Motor neuron (in vitro differentiated cells): ENCODE measurements at regions of chr3 and their contacts with region 1.

Region 1: DNA sequence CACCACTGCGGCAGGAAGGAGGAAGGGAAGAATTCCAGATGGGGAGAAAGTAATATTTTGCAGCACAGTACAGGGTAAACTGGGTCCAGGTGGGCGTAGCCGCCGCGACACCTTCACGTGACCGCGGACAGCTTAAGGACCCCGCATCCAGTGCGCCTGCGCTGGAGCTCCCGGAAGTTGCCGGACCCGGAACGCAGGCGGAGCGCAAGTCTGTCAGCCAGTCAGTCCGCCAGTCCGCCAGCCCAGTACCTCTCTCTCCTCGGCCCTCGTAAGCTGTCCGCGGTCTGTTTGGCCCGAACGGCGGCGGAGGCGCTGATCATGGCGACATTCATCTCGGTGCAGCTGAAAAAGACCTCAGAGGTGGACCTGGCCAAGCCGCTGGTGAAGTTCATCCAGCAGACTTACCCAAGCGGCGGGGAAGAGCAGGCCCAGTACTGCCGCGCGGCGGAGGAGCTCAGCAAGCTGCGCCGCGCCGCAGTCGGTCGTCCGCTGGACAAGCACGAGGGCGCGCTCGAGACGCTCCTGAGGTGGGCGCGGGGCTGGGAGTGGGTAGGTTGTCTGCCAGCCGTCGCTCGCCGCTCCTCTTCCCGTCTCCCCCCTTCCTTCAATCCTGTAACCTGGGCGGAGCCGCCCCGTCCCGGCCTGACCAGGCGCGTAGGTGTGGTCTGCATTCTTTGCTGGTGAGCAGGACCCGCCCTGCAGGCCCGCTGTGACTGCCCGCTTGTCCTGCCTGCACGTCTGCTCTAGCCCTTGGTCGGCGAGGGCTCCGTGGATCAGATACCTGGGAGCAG is at the start of gene PDCD6IP:
- ATAC-seq: peak; percentile 87 to 92 (median 91)
- H3K4me3 ChIP-seq: peak within 1 kb of the TSS; percentile 77 to 96 (median 79)
- H3K27ac ChIP-seq: peak within 1 kb of the TSS; percentile 53 to 90
- H3K4me1 ChIP-seq: peaks cover 4 to 19% of the 10 kb centered on the region in 2 donors
- total RNA-seq, gene PDCD6IP: 56.8 to 166 (median 96.8) TPM

Region 2: GRCh38 chr3:33131331-33132018 is 667.1 kb before region 1 on chr3:
- in situ Hi-C with region 1: loop called in 1 of 9 experiments (anchors 25 kb)
- ATAC-seq: peak; percentile 79 to 96 (median 87)
- H3K4me3 ChIP-seq: no peak overlapping the region
- H3K27ac ChIP-seq: no peak overlapping the region
- H3K4me1 ChIP-seq: no peaks in the 10 kb centered on the region

Region 3: DNA sequence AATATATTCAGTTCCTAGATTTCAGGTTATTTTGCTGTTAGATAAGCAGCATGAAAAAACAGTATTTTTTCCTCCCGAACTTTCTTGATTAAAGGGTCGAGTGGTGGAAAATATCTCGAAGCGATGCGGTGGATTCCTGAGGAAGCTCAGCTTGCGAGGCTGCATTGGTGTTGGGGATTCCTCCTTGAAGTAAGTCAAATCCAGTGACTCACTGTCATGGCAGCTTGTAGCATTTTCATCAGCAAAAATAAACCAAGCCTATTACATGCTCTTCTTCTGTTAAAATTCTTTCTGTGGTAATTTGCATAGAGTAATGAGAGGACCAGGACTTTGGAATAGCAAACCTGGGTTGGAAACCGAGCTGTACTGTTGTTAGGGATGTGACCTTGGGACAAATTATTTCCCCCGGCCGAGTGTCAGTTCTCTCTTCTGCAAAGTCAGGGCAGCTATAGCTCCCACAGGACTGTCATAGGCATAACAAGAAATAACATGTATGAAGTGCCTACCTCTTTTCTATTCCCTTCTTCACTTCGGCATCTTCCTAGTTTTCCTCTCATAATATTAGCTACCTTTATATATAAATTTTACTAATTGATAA is 434.0 kb before region 1 on chr3:
- in situ Hi-C with region 1: no loop called
- ATAC-seq: no peak
- H3K4me3 ChIP-seq: no peak overlapping the region
- H3K27ac ChIP-seq: no peak overlapping the region
- H3K4me1 ChIP-seq: no peaks in the 10 kb centered on the region

Region 4: GRCh38 chr3:33392703-33393125 is 405.9 kb before region 1 on chr3:
- in situ Hi-C with region 1: loop called in 1 of 9 experiments (anchors 25 kb)
- ATAC-seq: peak in 7 of 8 experiments; percentile 50 to 91 (median 73)
- H3K4me3 ChIP-seq: no peak overlapping the region
- H3K27ac ChIP-seq: no peak overlapping the region
- H3K4me1 ChIP-seq: peaks cover 0 to 9% of the 10 kb centered on the region in 2 donors

Region 5: GRCh38 chr3:33636125-33636850 is 162.3 kb before region 1 on chr3:
- in situ Hi-C with region 1: loop called in 3 of 9 experiments (anchors 25 kb)
- ATAC-seq: peak in 1 of 8 experiments; percentile 16
- H3K4me3 ChIP-seq: no peak overlapping the region
- H3K27ac ChIP-seq: no peak overlapping the region
- H3K4me1 ChIP-seq: peaks cover 0 to 9% of the 10 kb centered on the region in 2 donors